HCT116 (cell line): ENCODE measurements at regions of chr1 and their contacts with region 1.

Region 1: GRCh38 chr1:188782219-188782841 is 1695.3 kb downstream of the BRINP3 start:
- DNase-seq: peak; percentile 81
- ATAC-seq: peak; percentile 100
- H3K4me3 ChIP-seq: no peak overlapping the region
- H3K27ac ChIP-seq: no peak overlapping the region
- H3K4me1 ChIP-seq: no peaks in the 10 kb centered on the region
- H3K27me3 ChIP-seq: no peaks in the 10 kb centered on the region
- CTCF ChIP-seq: peak; percentile 58 to 78 (median 78); a peak in 5 of 6 replicates
- POLR2A ChIP-seq: no peak
- RAD21 ChIP-seq: peak; percentile 68

Region 2: DNA sequence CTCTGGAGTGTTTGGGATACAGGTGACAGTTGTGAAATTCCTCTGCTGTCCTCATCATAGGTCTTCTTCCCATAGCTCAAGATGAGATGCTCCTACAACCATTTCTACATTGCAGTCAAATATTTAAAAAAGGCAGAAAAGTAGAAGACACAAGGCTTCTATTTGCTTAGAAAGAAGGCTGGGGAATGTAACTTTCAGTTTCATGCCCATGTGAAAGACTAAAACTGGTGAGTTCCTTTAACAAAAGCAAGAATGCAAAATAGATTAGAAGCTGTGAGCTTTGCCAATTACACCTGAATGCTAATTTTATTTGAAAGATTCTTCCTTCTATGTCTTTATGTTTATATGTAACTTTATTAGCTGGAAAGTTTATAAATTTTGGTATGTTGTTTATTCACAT is 12.6 kb after region 1 on chr1:
- CTCF ChIA-PET with region 1: interaction called, 16 read pairs
- POLR2A ChIA-PET with region 1: no interaction called
- RAD21 ChIA-PET with region 1: no interaction called
- intact Hi-C with region 1: no loop called
- DNase-seq: no peak
- ATAC-seq: no peak
- H3K4me3 ChIP-seq: no peak overlapping the region
- H3K27ac ChIP-seq: no peak overlapping the region
- H3K4me1 ChIP-seq: no peaks in the 10 kb centered on the region
- H3K27me3 ChIP-seq: no peaks in the 10 kb centered on the region
- CTCF ChIP-seq: no peak
- POLR2A ChIP-seq: no peak
- RAD21 ChIP-seq: no peak

Region 3: GRCh38 chr1:188888387-188888786 is 106.1 kb after region 1 on chr1:
- CTCF ChIA-PET with region 1: no interaction called
- POLR2A ChIA-PET with region 1: no interaction called
- RAD21 ChIA-PET with region 1: no interaction called
- intact Hi-C with region 1: no loop called
- DNase-seq: no peak
- ATAC-seq: no peak
- H3K4me3 ChIP-seq: no peak overlapping the region
- H3K27ac ChIP-seq: no peak overlapping the region
- H3K4me1 ChIP-seq: no peaks in the 10 kb centered on the region
- H3K27me3 ChIP-seq: no peaks in the 10 kb centered on the region
- CTCF ChIP-seq: no peak
- POLR2A ChIP-seq: no peak
- RAD21 ChIP-seq: no peak

Region 4: DNA sequence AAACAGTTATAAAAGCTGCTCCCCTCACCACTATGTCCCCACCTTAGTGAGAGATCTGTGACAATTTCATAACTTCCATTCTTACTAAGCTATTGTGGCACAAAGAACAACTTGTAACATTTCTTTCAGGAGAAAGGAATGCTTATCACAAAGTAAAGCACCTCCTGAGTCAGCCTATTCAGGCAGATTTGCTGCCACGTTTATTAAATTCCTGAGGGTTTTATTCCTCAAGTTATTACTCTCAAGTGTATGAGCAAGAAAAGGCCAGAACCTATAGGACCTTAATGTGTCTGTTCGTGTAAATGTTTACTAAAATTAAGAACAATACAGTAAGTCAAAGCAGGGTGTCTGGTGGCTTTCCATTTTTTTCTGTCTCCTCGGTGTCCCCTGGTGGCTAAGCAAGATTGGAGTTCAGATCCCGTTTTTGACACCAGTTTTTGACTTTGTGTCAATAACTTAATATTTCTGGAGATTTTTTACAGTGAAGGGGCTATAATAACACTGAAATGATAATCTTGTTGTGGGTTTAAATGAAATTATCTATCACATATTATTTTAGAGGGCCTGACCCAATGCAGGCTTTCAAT is 155.7 kb after region 1 on chr1:
- CTCF ChIA-PET with region 1: interaction called, 3 read pairs
- POLR2A ChIA-PET with region 1: no interaction called
- RAD21 ChIA-PET with region 1: interaction called in 1 of 2 experiments, 3 read pairs
- intact Hi-C with region 1: loop called (anchors 5 kb)
- DNase-seq: peak; percentile 26
- ATAC-seq: peak; percentile 61
- H3K4me3 ChIP-seq: no peak overlapping the region
- H3K27ac ChIP-seq: no peak overlapping the region
- H3K4me1 ChIP-seq: no peaks in the 10 kb centered on the region
- H3K27me3 ChIP-seq: no peaks in the 10 kb centered on the region
- CTCF ChIP-seq: peak; percentile 42 to 65 (median 61); a peak in 5 of 6 replicates
- POLR2A ChIP-seq: no peak
- RAD21 ChIP-seq: peak; percentile 72

Region 5: GRCh38 chr1:190436615-190437014 is 1654.3 kb after region 1 on chr1:
- CTCF ChIA-PET with region 1: interaction called, 5 read pairs
- POLR2A ChIA-PET with region 1: no interaction called
- RAD21 ChIA-PET with region 1: no interaction called
- intact Hi-C with region 1: loop called (anchors 5 kb)
- DNase-seq: peak; percentile 36
- ATAC-seq: peak; percentile 75
- H3K4me3 ChIP-seq: no peak overlapping the region
- H3K27ac ChIP-seq: no peak overlapping the region
- H3K4me1 ChIP-seq: no peaks in the 10 kb centered on the region
- H3K27me3 ChIP-seq: no peaks in the 10 kb centered on the region
- CTCF ChIP-seq: peak; percentile 41 to 53 (median 52); a peak in 4 of 6 replicates
- POLR2A ChIP-seq: no peak
- RAD21 ChIP-seq: peak; percentile 73